CD8-positive, alpha-beta T cell (primary cell): ENCODE measurements at regions of chr1 and their contacts with region 1.

Region 1: DNA sequence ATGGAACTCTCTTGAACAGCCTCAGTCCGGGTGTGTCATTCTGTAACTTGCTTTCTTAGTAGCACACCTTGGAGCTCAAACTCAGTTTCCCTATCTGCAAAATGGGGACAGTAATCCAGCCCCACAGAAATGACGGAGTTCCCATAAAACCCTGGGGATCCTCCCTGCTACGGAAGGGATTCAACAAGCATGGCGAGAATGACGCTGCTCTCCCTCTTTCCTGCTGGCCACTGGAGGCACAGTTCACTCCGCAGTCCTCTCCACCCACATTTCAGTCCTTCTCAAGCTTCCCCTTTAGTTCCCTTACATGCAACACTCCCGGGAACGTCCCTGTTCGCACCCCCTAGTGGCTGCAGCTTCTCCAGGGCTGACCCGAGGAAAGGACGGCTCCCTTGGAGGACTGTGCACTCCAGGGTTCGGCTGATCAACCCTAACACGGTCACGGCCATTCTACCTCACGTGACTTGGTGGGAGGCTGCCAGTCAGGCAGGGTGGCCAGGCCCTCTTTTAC is 20.6 kb downstream of the RUNX3 start:
- DNase-seq: peak in 3 of 9 experiments; percentile 13 to 41 (median 28)
- ATAC-seq: no peak
- H3K4me3 ChIP-seq: no peak overlapping the region
- H3K4me3 Mint-ChIP-seq: peak overlapping the region; percentile 5
- H3K27ac ChIP-seq: peak overlapping the region; percentile 24 to 96
- H3K27ac Mint-ChIP-seq: peak overlapping the region; percentile 100
- H3K4me1 ChIP-seq: peaks cover 87% of the 10 kb centered on the region
- H3K4me1 Mint-ChIP-seq: peaks cover 68% of the 10 kb centered on the region
- H3K27me3 ChIP-seq: no peaks in the 10 kb centered on the region
- H3K27me3 Mint-ChIP-seq: no peaks in the 10 kb centered on the region
- CTCF ChIP-seq: no peak

Region 2: DNA sequence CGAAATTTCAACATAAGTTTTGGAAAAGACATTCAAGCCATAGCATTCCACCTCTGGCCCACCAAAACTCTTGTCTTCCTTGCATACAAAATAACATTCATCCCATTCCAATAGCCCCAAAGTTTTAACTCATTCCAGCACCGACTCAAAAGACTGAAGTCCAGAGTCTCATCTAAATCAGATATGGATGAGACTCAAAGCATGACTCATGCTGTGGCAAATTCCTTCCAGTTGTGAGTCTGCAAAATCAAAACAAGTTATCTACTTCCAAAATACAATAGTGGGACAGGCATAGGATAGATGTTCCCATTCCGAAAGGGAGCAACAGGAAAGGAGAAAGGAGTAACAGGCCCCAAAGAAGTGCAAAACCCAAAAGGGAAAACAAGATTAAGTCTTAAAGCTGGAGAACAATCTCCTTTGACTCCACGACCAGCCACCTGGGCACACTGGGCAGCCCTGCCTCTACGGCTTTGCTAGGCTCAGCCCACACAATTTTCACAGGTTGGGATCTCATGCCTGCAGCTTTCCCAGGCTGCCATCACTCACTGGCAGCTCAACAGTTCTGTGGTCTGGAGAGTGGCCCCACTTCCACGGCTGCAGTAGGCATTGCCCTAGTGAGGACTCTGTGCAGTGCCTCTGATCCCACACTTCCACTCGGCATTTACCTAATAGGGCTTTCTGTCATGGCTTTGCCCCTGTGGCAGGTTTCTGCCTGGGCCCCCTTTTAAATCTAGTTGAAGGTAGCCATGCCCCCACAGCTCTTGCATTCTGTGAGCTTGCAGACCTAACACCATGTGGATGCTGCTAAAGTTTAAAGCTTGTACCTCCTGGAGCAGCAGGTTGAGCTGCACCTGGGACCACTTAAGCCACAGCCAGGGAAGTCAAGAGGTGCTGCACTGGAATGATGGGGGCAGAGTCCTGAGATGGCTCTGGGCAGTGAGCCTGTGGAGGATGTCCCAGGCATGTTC is 30.4 kb before region 1 on chr1:
- CTCF ChIA-PET with region 1: no interaction called
- POLR2A ChIA-PET with region 1: no interaction called
- intact Hi-C with region 1: no loop called
- DNase-seq: no peak
- ATAC-seq: no peak
- H3K4me3 ChIP-seq: no peak overlapping the region
- H3K4me3 Mint-ChIP-seq: no peak overlapping the region
- H3K27ac ChIP-seq: no peak overlapping the region
- H3K27ac Mint-ChIP-seq: no peak overlapping the region
- H3K4me1 ChIP-seq: no peaks in the 10 kb centered on the region
- H3K4me1 Mint-ChIP-seq: no peaks in the 10 kb centered on the region
- H3K27me3 ChIP-seq: no peaks in the 10 kb centered on the region
- H3K27me3 Mint-ChIP-seq: no peaks in the 10 kb centered on the region
- CTCF ChIP-seq: no peak

Region 3: DNA sequence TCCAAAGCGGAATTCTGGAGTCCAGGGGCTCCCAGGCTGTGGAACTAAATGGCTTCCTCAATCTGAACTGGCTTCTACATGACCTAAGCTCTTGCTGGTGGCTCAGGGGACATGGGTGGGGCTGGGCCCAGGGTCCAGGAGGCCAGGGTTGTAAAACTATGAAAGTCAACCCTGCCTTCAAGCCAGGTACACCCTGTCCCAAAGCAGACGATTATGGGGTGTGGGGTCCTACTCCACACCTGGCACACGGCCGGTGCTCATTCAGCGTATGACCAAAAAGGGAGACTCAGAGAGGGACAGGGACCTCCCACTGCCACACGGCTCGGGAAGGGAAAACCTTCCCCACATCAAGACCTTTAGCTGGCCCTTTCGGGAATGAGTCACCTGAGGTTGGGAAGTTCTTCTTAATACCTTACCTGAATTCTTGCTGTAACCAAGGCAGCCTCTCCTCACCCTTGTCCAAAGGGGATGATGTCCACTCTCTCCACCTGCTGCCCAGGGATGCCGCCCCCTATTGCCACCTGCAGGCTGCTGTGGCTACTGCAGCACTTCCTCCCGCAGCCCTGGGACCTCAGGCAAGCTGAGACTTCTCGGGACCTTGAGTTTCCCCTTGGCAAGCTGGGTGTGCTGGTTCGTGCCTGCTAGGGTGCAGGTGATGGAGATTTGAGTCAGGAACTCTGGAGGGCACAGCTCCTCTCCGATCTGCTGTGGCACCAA is 11.5 kb before region 1 on chr1:
- CTCF ChIA-PET with region 1: interaction called, 21 read pairs
- POLR2A ChIA-PET with region 1: interaction called, 16 read pairs
- intact Hi-C with region 1: no loop called
- DNase-seq: peak in 7 of 9 experiments; percentile 35 to 75 (median 57)
- ATAC-seq: peak; percentile 52
- H3K4me3 ChIP-seq: no peak overlapping the region
- H3K4me3 Mint-ChIP-seq: no peak overlapping the region
- H3K27ac ChIP-seq: no peak overlapping the region
- H3K27ac Mint-ChIP-seq: peak overlapping the region; percentile 58
- H3K4me1 ChIP-seq: peaks cover 24% of the 10 kb centered on the region
- H3K4me1 Mint-ChIP-seq: peaks cover 36% of the 10 kb centered on the region
- H3K27me3 ChIP-seq: no peaks in the 10 kb centered on the region
- H3K27me3 Mint-ChIP-seq: no peaks in the 10 kb centered on the region
- CTCF ChIP-seq: peak; percentile 72

Region 4: DNA sequence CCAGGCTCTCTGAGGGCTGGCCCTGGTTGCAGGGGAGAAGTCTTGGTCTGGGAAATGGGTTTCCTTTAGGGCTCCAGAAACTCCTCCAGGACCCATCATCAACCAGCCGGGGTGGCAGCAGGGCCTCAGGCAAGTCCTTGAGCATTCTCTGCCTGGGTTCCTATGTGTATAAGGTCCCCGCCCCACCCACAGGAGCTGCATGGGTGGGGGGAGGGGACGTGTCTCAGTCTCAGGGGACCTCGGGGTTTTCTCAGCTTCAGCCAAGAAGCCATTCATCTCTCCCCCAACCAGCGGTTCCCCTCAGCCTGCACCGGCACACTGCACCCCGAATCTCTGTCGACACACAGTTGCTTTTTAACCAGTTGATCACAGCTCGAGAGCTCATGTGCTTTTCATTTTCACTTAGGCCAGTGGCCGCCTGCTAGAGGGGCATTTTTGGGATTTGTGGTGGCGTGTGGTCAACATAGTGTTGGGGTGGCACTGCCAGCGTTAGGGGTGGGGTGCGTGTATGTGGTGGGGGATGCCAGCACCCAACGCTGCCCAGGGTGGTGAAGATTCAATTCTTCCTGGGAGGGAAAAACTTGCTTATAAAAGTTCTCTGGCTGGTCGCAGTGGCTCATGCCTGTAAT is 14.2 kb after region 1 on chr1:
- CTCF ChIA-PET with region 1: interaction called, 100 read pairs
- POLR2A ChIA-PET with region 1: interaction called, 195 read pairs
- intact Hi-C with region 1: loop called (anchors 1 kb)
- DNase-seq: peak in 5 of 9 experiments; percentile 48 to 83 (median 60)
- ATAC-seq: peak; percentile 5
- H3K4me3 ChIP-seq: peak overlapping the region; percentile 16 to 23
- H3K4me3 Mint-ChIP-seq: peak overlapping the region; percentile 60
- H3K27ac ChIP-seq: peak overlapping the region; percentile 56 to 96
- H3K27ac Mint-ChIP-seq: peak overlapping the region; percentile 99
- H3K4me1 ChIP-seq: peaks cover 88% of the 10 kb centered on the region
- H3K4me1 Mint-ChIP-seq: peaks cover 78% of the 10 kb centered on the region
- H3K27me3 ChIP-seq: no peaks in the 10 kb centered on the region
- H3K27me3 Mint-ChIP-seq: no peaks in the 10 kb centered on the region
- CTCF ChIP-seq: no peak